CD4-positive, alpha-beta T cell (primary cell): ENCODE measurements at regions of chr3 and their contacts with region 1.

Region 1: GRCh38 chr3:32302601-32303398 is 64.3 kb downstream of the CMTM8 start:
- DNase-seq: peak in 2 of 14 experiments; percentile 16 to 18
- ATAC-seq: peak; percentile 27
- H3K4me3 ChIP-seq: no peak overlapping the region
- H3K4me3 Mint-ChIP-seq: peak overlapping the region; percentile 68
- H3K27ac ChIP-seq: peak overlapping the region; percentile 71 to 80
- H3K27ac Mint-ChIP-seq: peak overlapping the region; percentile 97
- H3K4me1 ChIP-seq: peaks cover 42% of the 10 kb centered on the region
- H3K4me1 Mint-ChIP-seq: peaks cover 74% of the 10 kb centered on the region
- H3K27me3 ChIP-seq: no peaks in the 10 kb centered on the region
- H3K27me3 Mint-ChIP-seq: no peaks in the 10 kb centered on the region
- CTCF ChIP-seq: no peak

Region 2: DNA sequence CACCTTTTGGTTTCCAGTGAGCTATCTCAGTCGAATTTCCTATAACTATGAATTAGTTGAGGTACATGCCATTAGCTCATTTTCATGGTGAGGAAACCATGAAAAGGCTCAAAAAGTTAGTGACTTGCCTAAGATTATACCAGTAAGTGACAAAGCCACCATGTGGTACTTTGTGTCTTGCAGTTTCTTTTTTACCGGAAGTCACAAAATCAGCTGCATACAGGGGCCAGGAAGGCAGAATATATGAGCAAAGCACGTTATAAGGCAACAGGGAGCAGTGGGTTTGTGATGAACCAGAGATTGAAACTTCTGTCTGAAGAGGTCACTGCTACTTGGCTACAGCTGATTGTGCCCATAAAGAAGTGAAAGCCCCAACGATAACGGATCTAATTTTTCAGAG is 14.0 kb before region 1 on chr3:
- CTCF ChIA-PET with region 1: interaction called, 3 read pairs
- POLR2A ChIA-PET with region 1: interaction called, 14 read pairs
- intact Hi-C with region 1: no loop called
- DNase-seq: peak in 6 of 14 experiments; percentile 12 to 73 (median 48)
- ATAC-seq: peak; percentile 83
- H3K4me3 ChIP-seq: no peak overlapping the region
- H3K4me3 Mint-ChIP-seq: peak overlapping the region; percentile 3
- H3K27ac ChIP-seq: no peak overlapping the region
- H3K27ac Mint-ChIP-seq: peak overlapping the region; percentile 79
- H3K4me1 ChIP-seq: peaks cover 37% of the 10 kb centered on the region
- H3K4me1 Mint-ChIP-seq: peaks cover 50% of the 10 kb centered on the region
- H3K27me3 ChIP-seq: no peaks in the 10 kb centered on the region
- H3K27me3 Mint-ChIP-seq: no peaks in the 10 kb centered on the region
- CTCF ChIP-seq: peak; percentile 19

Region 3: GRCh38 chr3:32313723-32314473 is 11.1 kb after region 1 on chr3:
- CTCF ChIA-PET with region 1: interaction called, 3 read pairs
- POLR2A ChIA-PET with region 1: interaction called, 19 read pairs
- intact Hi-C with region 1: no loop called
- DNase-seq: peak in 5 of 14 experiments; percentile 8 to 58 (median 25)
- ATAC-seq: peak; percentile 81
- H3K4me3 ChIP-seq: no peak overlapping the region
- H3K4me3 Mint-ChIP-seq: peak overlapping the region; percentile 26
- H3K27ac ChIP-seq: peak overlapping the region in 1 of 2 donors; percentile 60
- H3K27ac Mint-ChIP-seq: peak overlapping the region; percentile 77
- H3K4me1 ChIP-seq: peaks cover 23% of the 10 kb centered on the region
- H3K4me1 Mint-ChIP-seq: peaks cover 42% of the 10 kb centered on the region
- H3K27me3 ChIP-seq: no peaks in the 10 kb centered on the region
- H3K27me3 Mint-ChIP-seq: no peaks in the 10 kb centered on the region
- CTCF ChIP-seq: no peak

Region 4: DNA sequence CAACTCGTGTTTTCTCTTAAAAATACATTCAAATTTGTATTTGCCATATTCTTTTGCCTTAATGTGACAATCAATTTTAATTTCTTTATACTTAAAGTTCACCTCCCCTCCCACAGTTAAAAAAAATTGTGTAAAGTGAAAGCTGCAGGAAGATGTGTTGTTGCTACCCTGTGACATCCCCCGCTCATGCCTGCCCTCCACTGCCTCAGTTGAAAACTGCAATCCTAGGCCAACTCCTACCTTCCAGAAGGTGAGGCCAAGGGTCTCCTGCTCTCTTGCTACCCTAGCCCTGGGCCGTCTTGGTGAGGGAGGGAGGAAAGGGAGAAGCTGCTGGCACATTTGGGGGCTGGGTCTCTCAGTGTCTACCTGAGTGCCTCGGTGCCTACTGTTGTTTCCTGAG is 31.9 kb after region 1 on chr3:
- CTCF ChIA-PET with region 1: interaction called, 13 read pairs
- POLR2A ChIA-PET with region 1: interaction called, 16 read pairs
- intact Hi-C with region 1: loop called in 1 of 2 experiments (anchors 2 kb)
- DNase-seq: peak; percentile 50 to 78 (median 67)
- ATAC-seq: peak; percentile 90
- H3K4me3 ChIP-seq: no peak overlapping the region
- H3K4me3 Mint-ChIP-seq: peak overlapping the region; percentile 54
- H3K27ac ChIP-seq: peak overlapping the region; percentile 27 to 40
- H3K27ac Mint-ChIP-seq: peak overlapping the region; percentile 96
- H3K4me1 ChIP-seq: peaks cover 38% of the 10 kb centered on the region
- H3K4me1 Mint-ChIP-seq: peaks cover 67% of the 10 kb centered on the region
- H3K27me3 ChIP-seq: no peaks in the 10 kb centered on the region
- H3K27me3 Mint-ChIP-seq: no peaks in the 10 kb centered on the region
- CTCF ChIP-seq: peak; percentile 65

Region 5: DNA sequence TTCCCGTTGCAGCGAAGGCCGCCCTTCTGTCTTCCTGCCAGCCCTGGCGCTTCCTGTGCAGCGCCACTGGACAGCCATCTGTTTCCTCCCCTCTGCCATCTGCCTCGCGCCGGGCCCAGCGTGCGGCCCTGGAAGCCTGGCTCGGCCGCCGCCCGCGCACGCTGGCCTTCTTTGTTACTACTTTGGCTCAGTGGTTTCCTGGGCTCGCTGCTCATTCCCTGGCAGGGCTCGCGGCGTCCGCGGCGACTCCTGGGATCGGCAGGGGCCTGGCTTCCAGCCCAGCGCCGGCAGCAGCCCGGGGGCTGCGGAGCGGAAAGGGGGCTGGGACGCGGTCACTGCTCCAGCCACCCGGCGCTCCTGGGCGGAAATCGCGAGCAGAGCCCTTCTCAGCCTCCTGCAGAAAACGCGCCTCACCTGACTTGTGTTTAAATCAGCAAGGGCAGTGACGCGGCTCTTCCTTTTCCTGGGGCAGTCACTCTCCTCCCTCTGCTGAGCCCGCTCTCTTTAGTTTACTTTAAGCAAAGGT is 98.8 kb after region 1 on chr3:
- CTCF ChIA-PET with region 1: no interaction called
- POLR2A ChIA-PET with region 1: interaction called, 4 read pairs
- intact Hi-C with region 1: loop called (anchors 2 to 5 kb)
- DNase-seq: peak; percentile 37 to 84 (median 58)
- ATAC-seq: peak; percentile 73
- H3K4me3 ChIP-seq: peak overlapping the region; percentile 65
- H3K4me3 Mint-ChIP-seq: peak overlapping the region; percentile 92
- H3K27ac ChIP-seq: peak overlapping the region; percentile 85 to 92
- H3K27ac Mint-ChIP-seq: peak overlapping the region; percentile 90
- H3K4me1 ChIP-seq: peaks cover 62% of the 10 kb centered on the region
- H3K4me1 Mint-ChIP-seq: peaks cover 77% of the 10 kb centered on the region
- H3K27me3 ChIP-seq: no peaks in the 10 kb centered on the region
- H3K27me3 Mint-ChIP-seq: no peaks in the 10 kb centered on the region
- CTCF ChIP-seq: no peak